ENCODE measurements at regions of chr18 and their contacts with region 1.

Region 1: DNA sequence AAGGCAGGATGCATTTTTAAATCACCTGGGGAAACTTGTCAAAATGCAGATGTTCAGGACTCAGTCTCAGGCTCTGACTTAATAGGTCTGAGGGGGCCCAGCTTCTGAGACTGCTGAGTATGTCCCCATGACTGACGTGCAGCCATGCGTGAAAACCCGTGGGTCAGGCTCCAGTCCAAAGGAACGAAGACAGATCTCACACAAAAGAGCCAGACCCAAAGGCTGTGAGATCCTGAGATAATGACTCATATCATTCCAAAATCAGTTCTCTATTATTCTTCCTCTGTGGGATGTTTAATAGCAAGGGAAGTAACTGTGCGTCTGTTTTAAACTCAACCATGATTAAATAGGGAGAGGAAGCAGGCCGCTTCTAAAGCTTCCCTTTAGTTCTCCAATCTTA is 107.4 kb upstream of the ACAA2 start:
- DNase-seq: peak in 1 of 2 experiments; percentile 32
- H3K4me3 ChIP-seq: no peak overlapping the region
- H3K27ac ChIP-seq: no peak overlapping the region
- H3K4me1 ChIP-seq: no peaks in the 10 kb centered on the region
- H3K27me3 ChIP-seq: no peaks in the 10 kb centered on the region
- CTCF ChIP-seq: no peak

Region 2: DNA sequence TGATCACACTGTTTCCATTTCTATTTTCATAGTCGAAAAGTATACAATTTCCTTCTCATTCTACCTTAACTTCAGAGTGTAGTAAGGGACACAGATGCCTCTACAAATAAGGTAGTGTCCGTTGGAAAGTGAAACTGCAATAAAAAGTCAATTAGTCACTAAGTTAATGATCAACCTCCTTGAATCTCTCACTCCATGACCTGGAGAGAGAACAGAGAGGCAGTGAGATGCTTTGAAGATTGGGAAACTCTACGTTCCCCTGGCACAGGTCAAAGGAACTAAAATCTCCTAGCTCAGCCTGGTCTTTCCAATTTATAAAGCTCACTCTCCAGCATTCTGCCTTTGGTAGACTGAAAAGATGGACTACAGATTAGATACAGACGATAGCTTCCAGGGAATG is 46.4 kb after region 1 on chr18:
- CTCF ChIA-PET with region 1: no interaction called
- POLR2A ChIA-PET with region 1: no interaction called
- intact Hi-C with region 1: no loop called
- DNase-seq: no peak
- H3K4me3 ChIP-seq: no peak overlapping the region
- H3K27ac ChIP-seq: no peak overlapping the region
- H3K4me1 ChIP-seq: no peaks in the 10 kb centered on the region
- H3K27me3 ChIP-seq: no peaks in the 10 kb centered on the region
- CTCF ChIP-seq: no peak

Region 3: GRCh38 chr18:50695431-50696176 is 774.9 kb after region 1 on chr18:
- CTCF ChIA-PET with region 1: no interaction called
- POLR2A ChIA-PET with region 1: interaction called, 14 read pairs
- intact Hi-C with region 1: no loop called
- DNase-seq: no peak
- H3K4me3 ChIP-seq: no peak overlapping the region
- H3K27ac ChIP-seq: no peak overlapping the region
- H3K4me1 ChIP-seq: no peaks in the 10 kb centered on the region
- H3K27me3 ChIP-seq: no peaks in the 10 kb centered on the region
- CTCF ChIP-seq: no peak

Measured in PC-9 (cell line).